GM10248 (cell line): ENCODE measurements at regions of chr19 and their contacts with region 1.

Region 1: DNA sequence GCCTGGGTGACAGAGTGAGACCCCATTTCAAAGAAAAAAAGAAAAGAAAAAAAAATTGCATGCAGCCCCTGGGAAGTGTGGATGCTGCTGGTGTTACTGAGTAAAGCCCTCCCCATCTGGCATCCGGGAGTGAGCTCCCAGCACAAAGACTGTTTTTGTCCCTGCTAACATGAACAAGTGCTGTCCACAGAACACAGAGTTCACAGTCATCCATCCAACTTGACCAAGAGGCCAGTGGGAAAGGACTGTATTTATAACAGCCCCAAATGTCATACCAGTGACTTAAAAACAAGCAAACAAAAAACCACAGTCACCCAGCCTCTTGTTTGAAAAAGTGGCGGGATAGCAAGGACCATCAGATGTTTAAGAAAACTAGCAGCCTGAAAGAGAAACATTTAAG is 10.8 kb downstream of the FBXO17 start:
- DNase-seq: no peak
- CTCF ChIP-seq: no peak

Region 2: GRCh38 chr19:39038098-39038497 is 73.4 kb after region 1 on chr19:
- CTCF ChIA-PET with region 1: interaction called, 11 read pairs
- POLR2A ChIA-PET with region 1: no interaction called
- DNase-seq: no peak
- CTCF ChIP-seq: peak; percentile 13

Region 3: GRCh38 chr19:39110263-39110967 is 145.7 kb after region 1 on chr19:
- CTCF ChIA-PET with region 1: interaction called, 13 read pairs
- POLR2A ChIA-PET with region 1: no interaction called
- DNase-seq: peak; percentile 85
- CTCF ChIP-seq: peak; percentile 88